Activated naive CD4-positive, alpha-beta T cell treated with anti-CD3 and anti-CD28 coated beads for 36 hours (primary cell): ENCODE measurements at regions of chr7 and their contacts with region 1.

Region 1: GRCh38 chr7:150988230-150989226 is 2.3 kb upstream of the NOS3 start:
- DNase-seq: peak; percentile 77
- H3K4me3 Mint-ChIP-seq: no peak overlapping the region
- H3K27ac Mint-ChIP-seq: no peak overlapping the region
- H3K4me1 Mint-ChIP-seq: peaks cover 25% of the 10 kb centered on the region
- H3K27me3 Mint-ChIP-seq: no peaks in the 10 kb centered on the region

Region 2: DNA sequence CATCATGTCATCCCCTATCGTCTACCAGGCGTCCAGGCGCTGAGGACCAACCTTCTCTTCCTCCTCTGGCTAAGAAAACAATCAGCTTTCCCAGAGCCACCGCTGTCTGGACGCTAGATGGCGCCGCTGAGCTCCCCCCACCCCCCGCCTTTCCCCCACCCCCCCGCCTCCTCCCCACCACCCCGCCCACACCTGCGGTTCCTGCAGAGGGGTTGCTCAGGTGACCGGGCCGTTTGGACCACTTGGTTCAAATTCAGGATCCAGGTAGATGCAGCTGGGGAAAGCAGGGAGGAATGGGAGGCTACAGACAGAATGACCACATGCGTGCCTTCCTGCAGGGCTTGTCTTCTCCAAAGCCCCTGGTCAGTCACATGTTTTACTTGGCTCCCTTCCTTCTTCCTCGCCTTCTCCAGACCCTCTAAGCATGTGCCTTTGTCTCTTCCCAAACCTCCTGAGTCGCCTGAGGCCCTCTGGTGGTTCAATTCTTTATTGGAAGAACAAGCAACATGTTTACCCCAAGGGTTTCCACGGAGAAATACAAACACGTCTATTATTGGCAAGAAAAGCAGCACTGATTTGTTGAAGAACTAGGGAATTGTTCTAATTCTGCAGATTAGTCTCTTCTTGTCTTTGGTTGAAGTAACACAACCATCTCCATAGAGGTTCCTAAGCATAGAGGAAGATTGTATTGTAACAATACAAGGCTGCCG is 111.6 kb before region 1 on chr7:
- CTCF ChIA-PET with region 1: interaction called, 4 read pairs
- intact Hi-C with region 1: loop called (anchors 2 kb)
- DNase-seq: peak; percentile 64
- H3K4me3 Mint-ChIP-seq: peak overlapping the region; percentile 48
- H3K27ac Mint-ChIP-seq: no peak overlapping the region
- H3K4me1 Mint-ChIP-seq: peaks cover 9% of the 10 kb centered on the region
- H3K27me3 Mint-ChIP-seq: no peaks in the 10 kb centered on the region

Region 3: DNA sequence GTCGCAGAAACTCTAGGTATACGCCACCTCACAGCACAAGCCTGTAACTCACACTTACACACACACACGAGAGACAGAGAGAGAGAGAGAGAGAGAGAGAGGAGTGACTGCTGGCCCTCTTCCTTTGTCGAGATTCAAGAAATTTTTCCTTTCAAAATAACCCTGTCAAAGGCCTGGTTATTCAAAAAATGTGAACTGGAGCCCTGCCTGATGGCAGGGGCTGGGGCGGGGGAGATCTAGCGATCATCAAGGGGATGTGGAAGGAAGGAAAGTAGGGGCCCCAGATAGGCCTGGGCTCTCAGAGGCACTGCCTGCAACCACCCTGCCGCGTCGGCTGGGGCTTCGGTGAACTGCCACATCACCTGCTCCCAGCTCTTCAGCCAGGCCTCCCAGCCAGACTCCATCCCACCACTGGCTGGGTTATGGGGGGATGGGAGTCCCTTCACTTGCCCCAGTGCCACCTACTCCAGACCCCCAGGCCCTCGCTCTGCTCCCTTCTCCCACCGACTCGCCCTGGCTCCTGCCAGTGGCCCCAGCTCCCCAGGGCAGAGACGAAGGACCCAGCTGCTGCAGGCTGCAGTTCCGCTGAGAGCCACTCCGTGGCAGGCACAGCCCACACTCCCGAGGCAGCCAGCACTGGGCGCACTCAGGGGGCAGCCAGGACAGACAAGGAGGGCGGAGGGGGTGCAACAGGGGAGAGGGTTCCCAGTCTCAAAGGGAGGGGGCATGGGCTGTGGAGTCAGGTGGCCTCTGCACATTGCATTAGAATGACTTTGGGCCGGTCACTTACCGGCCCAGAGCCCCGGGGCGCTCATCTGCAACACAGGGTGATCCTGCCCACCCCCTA is 25.8 kb before region 1 on chr7:
- CTCF ChIA-PET with region 1: interaction called, 74 read pairs
- intact Hi-C with region 1: loop called (anchors 1 kb)
- DNase-seq: peak; percentile 68
- H3K4me3 Mint-ChIP-seq: no peak overlapping the region
- H3K27ac Mint-ChIP-seq: no peak overlapping the region
- H3K4me1 Mint-ChIP-seq: peaks cover 14% of the 10 kb centered on the region
- H3K27me3 Mint-ChIP-seq: peaks cover 16% of the 10 kb centered on the region

Region 4: GRCh38 chr7:151008511-151009323 is 20.2 kb after region 1 on chr7:
- CTCF ChIA-PET with region 1: interaction called, 29 read pairs
- intact Hi-C with region 1: no loop called
- DNase-seq: peak; percentile 70
- H3K4me3 Mint-ChIP-seq: peak overlapping the region; percentile 70
- H3K27ac Mint-ChIP-seq: peak overlapping the region; percentile 71
- H3K4me1 Mint-ChIP-seq: peaks cover 52% of the 10 kb centered on the region
- H3K27me3 Mint-ChIP-seq: no peaks in the 10 kb centered on the region